ENCODE measurements at regions of chr1 and their contacts with region 1.

Region 1: DNA sequence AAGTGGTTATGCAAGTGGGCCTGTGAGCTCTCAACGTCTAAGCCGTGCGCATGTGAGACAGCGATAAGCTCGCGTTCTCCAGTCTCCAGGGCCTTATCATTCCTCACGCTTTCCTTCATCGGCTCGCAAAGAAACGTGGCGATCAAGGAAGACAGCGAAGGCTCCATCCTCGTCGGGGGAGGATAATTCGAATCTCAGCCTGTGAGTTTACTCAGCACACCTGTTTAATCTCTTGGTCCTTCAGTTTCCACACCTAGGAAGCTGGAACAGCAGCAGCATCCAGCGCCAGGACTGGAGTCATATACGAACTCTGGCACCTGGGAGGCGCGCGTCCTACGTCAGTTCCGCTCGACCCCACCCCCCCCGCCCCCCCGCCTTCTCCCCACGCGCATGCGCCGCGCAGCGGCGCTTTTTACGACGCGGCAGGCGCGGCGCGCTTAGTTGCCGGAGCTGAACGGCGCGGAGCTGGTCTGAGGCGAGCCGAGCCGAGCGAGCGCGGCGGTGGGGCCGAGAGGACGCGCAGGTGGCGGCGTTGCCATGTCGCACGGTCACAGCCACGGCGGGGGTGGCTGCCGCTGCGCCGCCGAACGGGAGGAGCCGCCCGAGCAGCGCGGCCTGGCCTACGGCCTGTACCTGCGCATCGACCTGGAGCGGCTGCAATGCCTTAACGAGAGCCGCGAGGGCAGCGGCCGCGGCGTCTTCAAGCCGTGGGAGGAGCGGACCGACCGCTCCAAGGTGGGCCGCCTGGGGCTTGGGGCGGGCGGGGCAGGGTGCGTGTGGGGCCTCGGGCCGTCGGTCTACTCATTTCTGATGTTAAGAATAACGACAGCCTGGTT is at the start of gene PITHD1:
- DNase-seq: peak; percentile 86
- H3K4me3 ChIP-seq: peak within 1 kb of the TSS; percentile 43 to 81 (median 68)
- H3K27ac ChIP-seq: peak within 1 kb of the TSS; percentile 75
- H3K4me1 ChIP-seq: peaks cover 24% of the 10 kb centered on the region
- H3K27me3 ChIP-seq: no peaks in the 10 kb centered on the region
- CTCF ChIP-seq: no peak
- POLR2A ChIP-seq: peak; percentile 80
- total RNA-seq, gene PITHD1: 35.8 and 42.5 TPM in 2 replicates

Region 2: DNA sequence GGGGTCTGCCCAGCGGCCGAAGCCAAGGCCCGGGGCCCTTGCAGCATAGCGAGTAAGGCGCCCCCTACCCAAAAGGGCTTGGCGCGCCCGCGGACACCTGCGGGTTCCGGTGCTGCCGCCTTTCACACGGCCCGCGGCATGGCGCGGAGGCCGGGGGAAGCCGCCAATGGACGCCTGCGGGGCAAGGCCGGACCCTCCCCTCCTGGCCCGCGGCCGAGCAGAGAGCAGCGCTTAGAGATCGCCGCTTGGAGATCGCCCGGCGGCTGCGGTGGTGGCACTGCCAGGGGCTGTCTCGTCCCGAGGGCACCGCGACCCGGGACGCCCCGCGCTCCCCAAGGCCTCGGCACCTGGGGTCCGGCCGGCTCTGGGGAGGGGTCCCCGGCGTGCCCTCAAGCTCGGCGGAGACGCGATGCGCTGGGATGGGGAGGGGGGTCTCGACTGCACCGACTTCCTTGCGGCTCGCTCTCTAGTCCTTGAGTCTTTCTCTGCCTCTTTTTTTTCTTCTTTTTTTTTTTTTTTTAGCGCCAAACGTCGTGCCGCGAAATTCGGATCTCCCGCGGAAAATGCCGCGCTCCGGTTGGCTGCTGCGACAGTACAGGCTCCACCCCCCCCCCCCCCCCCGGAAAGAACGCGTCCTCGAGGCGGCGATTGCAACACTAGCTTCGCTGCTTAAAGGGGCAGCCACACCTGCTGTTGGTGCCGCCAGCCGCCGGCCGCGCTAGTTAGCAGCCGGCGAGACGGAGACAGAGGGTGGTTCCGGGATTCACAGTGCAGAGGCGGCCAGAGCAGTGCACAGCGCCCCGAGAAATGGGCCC is 247.2 kb before region 1 on chr1 and contains the start of gene E2F2:
- CTCF ChIA-PET with region 1: no interaction called
- POLR2A ChIA-PET with region 1: no interaction called
- dilution Hi-C with region 1: no loop called
- intact Hi-C with region 1: no loop called
- DNase-seq: peak; percentile 74
- H3K4me3 ChIP-seq: peak within 1 kb of the TSS; percentile 38 to 74 (median 68)
- H3K27ac ChIP-seq: peak within 1 kb of the TSS; percentile 73
- H3K4me1 ChIP-seq: peaks cover 35% of the 10 kb centered on the region
- H3K27me3 ChIP-seq: no peaks in the 10 kb centered on the region
- CTCF ChIP-seq: peak in 1 of 2 donors; percentile 18
- POLR2A ChIP-seq: no peak
- total RNA-seq, gene E2F2: 5.0 and 5.6 TPM in 2 replicates

Region 3: DNA sequence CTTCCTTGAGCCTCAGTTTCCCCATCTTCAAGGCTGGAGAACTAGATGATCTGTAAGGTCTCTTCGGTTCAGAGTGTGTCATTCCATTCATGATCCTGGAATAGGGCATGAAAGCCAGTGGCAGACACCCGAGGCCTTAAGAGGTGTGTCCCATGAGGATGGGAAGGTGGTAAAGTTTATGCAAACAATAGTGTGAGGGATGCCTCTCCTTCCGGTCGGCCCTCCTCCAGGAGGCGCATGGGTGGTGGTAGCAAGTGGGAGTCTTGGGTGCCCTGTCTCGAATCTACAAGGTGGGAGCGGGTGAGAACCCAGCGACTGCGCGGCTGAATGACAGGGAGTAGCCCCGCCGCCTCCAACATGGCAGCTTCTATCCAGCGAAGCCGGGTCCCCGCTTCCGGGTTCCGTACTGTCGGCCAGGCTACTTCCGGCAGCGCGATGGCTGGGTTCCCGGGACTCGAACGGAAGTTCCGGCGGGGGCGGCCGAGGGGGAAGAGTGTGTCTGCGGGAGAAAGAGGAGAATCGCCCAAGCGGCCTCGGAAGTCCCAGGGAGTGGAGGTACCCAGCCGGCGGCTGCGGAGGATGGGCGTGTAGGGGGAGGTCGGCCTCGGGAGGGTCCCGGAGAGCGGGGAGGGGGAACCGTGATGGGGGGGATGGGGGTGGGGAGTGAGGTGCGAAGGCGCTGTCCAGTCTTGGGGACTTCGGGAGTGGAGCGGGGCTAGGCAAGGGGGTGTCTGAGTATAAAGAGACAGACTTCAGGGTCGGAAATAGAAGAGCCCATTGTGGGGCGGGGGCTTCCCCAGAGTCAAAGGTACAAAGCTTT is 12.7 kb after region 1 on chr1 and contains the start of gene LYPLA2:
- CTCF ChIA-PET with region 1: interaction called, 6 read pairs
- POLR2A ChIA-PET with region 1: interaction called, 16 read pairs
- dilution Hi-C with region 1: no loop called
- intact Hi-C with region 1: loop called (anchors 1 kb)
- DNase-seq: peak; percentile 86
- H3K4me3 ChIP-seq: peak within 1 kb of the TSS; percentile 77 to 99 (median 95)
- H3K27ac ChIP-seq: peak within 1 kb of the TSS; percentile 92
- H3K4me1 ChIP-seq: peaks cover 22% of the 10 kb centered on the region
- H3K27me3 ChIP-seq: no peaks in the 10 kb centered on the region
- CTCF ChIP-seq: peak in 1 of 2 donors; percentile 8
- POLR2A ChIP-seq: peak; percentile 68
- total RNA-seq, gene LYPLA2: 110 TPM in 2 replicates

Region 4: GRCh38 chr1:23800400-23801337 is 22.5 kb after region 1 on chr1 and contains the start of gene GALE:
- CTCF ChIA-PET with region 1: interaction called, 11 read pairs
- POLR2A ChIA-PET with region 1: interaction called, 5 read pairs
- dilution Hi-C with region 1: no loop called
- intact Hi-C with region 1: loop called (anchors 1 kb)
- DNase-seq: peak; percentile 95
- H3K4me3 ChIP-seq: peak within 1 kb of the TSS; percentile 45 to 83 (median 73)
- H3K27ac ChIP-seq: peak within 1 kb of the TSS; percentile 62
- H3K4me1 ChIP-seq: peaks cover 15% of the 10 kb centered on the region
- H3K27me3 ChIP-seq: no peaks in the 10 kb centered on the region
- CTCF ChIP-seq: no peak
- POLR2A ChIP-seq: peak; percentile 61
- total RNA-seq, gene GALE: 39.2 and 42.9 TPM in 2 replicates

Measured in endothelial cell of umbilical vein (primary cell).